Naive thymus-derived CD4-positive, alpha-beta T cell (primary cell): ENCODE measurements at regions of chr9 and their contacts with region 1.

Region 1: DNA sequence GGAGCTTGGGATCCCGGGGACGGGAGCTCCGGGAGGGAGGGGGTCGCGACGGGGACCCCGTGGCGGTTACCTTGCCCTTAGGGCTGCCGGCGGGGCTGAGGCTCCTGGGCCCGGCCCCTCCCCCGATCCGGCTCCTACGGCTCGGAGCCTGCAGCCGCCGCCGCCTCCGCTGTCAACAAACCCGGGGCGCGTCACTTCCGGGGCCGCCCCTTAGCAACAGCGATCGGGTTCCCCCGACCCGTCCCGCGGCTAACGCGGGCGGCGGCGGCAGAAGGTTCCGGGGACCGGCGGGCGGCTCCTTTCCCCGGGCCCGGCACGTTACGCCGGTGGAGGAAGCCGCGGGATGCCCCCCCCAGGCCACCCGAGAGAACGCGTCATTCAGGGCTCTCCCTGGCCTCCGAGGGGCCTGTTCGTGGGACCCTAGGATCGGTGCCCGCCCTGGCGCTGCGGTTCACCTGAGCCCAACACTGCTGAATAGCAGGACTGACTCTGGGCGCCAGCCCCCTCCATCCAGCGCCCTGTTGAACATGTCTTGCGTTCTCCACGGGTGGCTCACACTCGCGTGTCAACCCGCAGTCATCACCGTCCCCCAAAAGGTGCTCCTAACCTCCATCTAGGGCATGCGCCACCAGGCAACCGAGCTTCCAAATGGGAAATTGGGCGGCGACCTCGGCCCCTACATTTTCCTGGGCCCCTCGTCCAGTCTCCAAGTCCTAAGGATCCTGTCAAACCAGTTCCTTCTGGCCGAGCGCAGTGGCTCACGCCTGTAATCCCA is at the start of gene ZER1:
- DNase-seq: peak; percentile 92 to 98 (median 95)
- ATAC-seq: peak; percentile 97
- H3K4me3 ChIP-seq: peak within 1 kb of the TSS; percentile 97
- H3K4me3 Mint-ChIP-seq: peak within 1 kb of the TSS; percentile 95 to 99 (median 98)
- H3K27ac ChIP-seq: peak within 1 kb of the TSS; percentile 93
- H3K27ac Mint-ChIP-seq: peak within 1 kb of the TSS; percentile 93 to 100 (median 100)
- H3K4me1 ChIP-seq: peaks cover 7 to 12% of the 10 kb centered on the region in 2 donors
- H3K4me1 Mint-ChIP-seq: peaks cover 21 to 40% (median 39%) of the 10 kb centered on the region in 7 donors
- H3K27me3 ChIP-seq: no peaks in the 10 kb centered on the region
- H3K27me3 Mint-ChIP-seq: no peaks in the 10 kb centered on the region
- total RNA-seq, gene ZER1: 22.7 to 51.2 (median 34.7) TPM

Region 2: DNA sequence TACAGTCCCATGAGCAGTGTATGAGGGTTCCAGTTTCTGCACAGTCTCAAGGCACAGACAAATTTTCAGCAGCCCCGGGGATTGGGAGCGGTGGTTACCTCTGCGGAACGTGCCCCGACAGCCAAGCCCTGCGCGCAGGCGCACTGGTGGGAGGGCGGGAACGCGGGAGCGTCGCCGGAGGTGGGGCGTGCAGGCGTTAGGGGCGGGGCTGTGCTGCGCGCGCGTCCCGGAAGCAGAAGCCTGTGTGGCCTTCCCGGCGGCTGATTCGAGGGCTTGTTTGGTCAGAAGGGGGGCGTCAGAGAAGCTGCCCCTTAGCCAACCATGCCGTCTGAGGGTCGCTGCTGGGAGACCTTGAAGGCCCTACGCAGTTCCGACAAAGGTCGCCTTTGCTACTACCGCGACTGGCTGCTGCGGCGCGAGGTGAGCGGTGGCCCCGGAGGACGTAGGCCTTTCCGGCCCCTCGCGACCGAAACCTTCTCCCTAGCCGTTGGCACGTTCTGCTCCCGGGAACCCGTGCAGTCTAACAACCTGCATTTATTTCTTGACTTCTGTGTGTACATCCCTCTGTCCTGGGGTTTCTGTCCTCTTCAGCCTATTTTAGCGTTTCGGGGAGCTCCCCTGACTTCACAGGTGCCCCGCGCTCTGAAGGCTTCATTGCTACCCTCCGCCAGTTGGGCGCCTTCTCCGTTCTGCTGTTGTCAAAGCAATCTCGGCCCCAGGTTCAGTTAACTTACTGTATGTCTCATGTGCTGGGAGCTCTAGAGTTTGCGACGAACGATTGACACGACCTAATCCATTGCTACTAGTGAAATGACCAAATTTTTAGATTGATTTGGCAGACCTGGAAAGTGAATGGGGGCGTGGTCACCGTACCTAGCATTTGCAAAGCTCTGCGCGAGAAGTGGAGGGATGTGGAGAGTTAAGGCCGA is 267.2 kb before region 1 on chr9 and contains the start of gene GLE1:
- CTCF ChIA-PET with region 1: no interaction called
- POLR2A ChIA-PET with region 1: no interaction called
- intact Hi-C with region 1: loop called in 1 of 2 experiments (anchors 2 kb)
- DNase-seq: peak; percentile 93 to 99 (median 97)
- ATAC-seq: peak; percentile 98
- H3K4me3 ChIP-seq: peak within 1 kb of the TSS; percentile 97
- H3K4me3 Mint-ChIP-seq: peak within 1 kb of the TSS; percentile 92 to 100 (median 99)
- H3K27ac ChIP-seq: peak within 1 kb of the TSS; percentile 92
- H3K27ac Mint-ChIP-seq: peak within 1 kb of the TSS; percentile 82 to 100 (median 99)
- H3K4me1 ChIP-seq: peaks cover 8 to 11% of the 10 kb centered on the region in 2 donors
- H3K4me1 Mint-ChIP-seq: peaks cover 0 to 38% (median 34%) of the 10 kb centered on the region in 7 donors
- H3K27me3 ChIP-seq: no peaks in the 10 kb centered on the region
- H3K27me3 Mint-ChIP-seq: no peaks in the 10 kb centered on the region
- total RNA-seq, gene GLE1: 14.2 to 46.5 (median 30.5) TPM

Region 3: GRCh38 chr9:128656416-128657343 is 115.3 kb before region 1 on chr9 and contains the start of gene DYNC2I2:
- CTCF ChIA-PET with region 1: no interaction called
- POLR2A ChIA-PET with region 1: interaction called, 5 read pairs
- intact Hi-C with region 1: loop called (anchors 1 to 5 kb)
- DNase-seq: peak; percentile 91 to 96 (median 96)
- ATAC-seq: peak; percentile 98
- H3K4me3 ChIP-seq: peak within 1 kb of the TSS; percentile 96
- H3K4me3 Mint-ChIP-seq: peak within 1 kb of the TSS; percentile 88 to 98 (median 94)
- H3K27ac ChIP-seq: peak within 1 kb of the TSS; percentile 99
- H3K27ac Mint-ChIP-seq: peak within 1 kb of the TSS; percentile 95 to 100 (median 99)
- H3K4me1 ChIP-seq: peaks cover 3 to 9% of the 10 kb centered on the region in 2 donors
- H3K4me1 Mint-ChIP-seq: peaks cover 0 to 14% (median 7%) of the 10 kb centered on the region in 7 donors
- H3K27me3 ChIP-seq: no peaks in the 10 kb centered on the region
- H3K27me3 Mint-ChIP-seq: no peaks in the 10 kb centered on the region
- total RNA-seq, gene DYNC2I2: 2.5 to 41.7 (median 3.8) TPM

Region 4: GRCh38 chr9:128723866-128724743 is 47.8 kb before region 1 on chr9 and contains the start of gene ZDHHC12:
- CTCF ChIA-PET with region 1: no interaction called
- POLR2A ChIA-PET with region 1: interaction called, 9 read pairs
- intact Hi-C with region 1: loop called (anchors 1 kb)
- DNase-seq: peak; percentile 96 to 99 (median 99)
- ATAC-seq: peak; percentile 97
- H3K4me3 ChIP-seq: peak within 1 kb of the TSS; percentile 97
- H3K4me3 Mint-ChIP-seq: peak within 1 kb of the TSS; percentile 85 to 97 (median 94)
- H3K27ac ChIP-seq: peak within 1 kb of the TSS; percentile 89
- H3K27ac Mint-ChIP-seq: peak within 1 kb of the TSS; percentile 85 to 96 (median 94)
- H3K4me1 ChIP-seq: peaks cover 13 to 29% of the 10 kb centered on the region in 2 donors
- H3K4me1 Mint-ChIP-seq: peaks cover 23 to 46% (median 39%) of the 10 kb centered on the region in 7 donors
- H3K27me3 ChIP-seq: no peaks in the 10 kb centered on the region
- H3K27me3 Mint-ChIP-seq: no peaks in the 10 kb centered on the region
- total RNA-seq, gene ZDHHC12: 21.2 to 70.3 (median 25.7) TPM

Region 5: GRCh38 chr9:128829477-128830251 is 57.7 kb after region 1 on chr9 and contains the start of gene SPOUT1:
- CTCF ChIA-PET with region 1: no interaction called
- POLR2A ChIA-PET with region 1: interaction called, 4 read pairs
- intact Hi-C with region 1: loop called in 1 of 2 experiments (anchors 2 kb)
- DNase-seq: peak; percentile 86 to 95 (median 92)
- ATAC-seq: peak; percentile 100
- H3K4me3 ChIP-seq: peak within 1 kb of the TSS; percentile 91
- H3K4me3 Mint-ChIP-seq: peak within 1 kb of the TSS; percentile 92 to 99 (median 95)
- H3K27ac ChIP-seq: peak within 1 kb of the TSS; percentile 81
- H3K27ac Mint-ChIP-seq: peak within 1 kb of the TSS; percentile 91 to 97 (median 94)
- H3K4me1 ChIP-seq: peaks cover 8 to 15% of the 10 kb centered on the region in 2 donors
- H3K4me1 Mint-ChIP-seq: peaks cover 14 to 26% (median 19%) of the 10 kb centered on the region in 7 donors
- H3K27me3 ChIP-seq: no peaks in the 10 kb centered on the region
- H3K27me3 Mint-ChIP-seq: no peaks in the 10 kb centered on the region
- total RNA-seq, gene SPOUT1: 38.9 to 83.6 (median 65.2) TPM

Region 6: GRCh38 chr9:129036241-129036922 is 264.4 kb after region 1 on chr9 and contains the start of gene MIGA2:
- CTCF ChIA-PET with region 1: no interaction called
- POLR2A ChIA-PET with region 1: interaction called, 4 read pairs
- intact Hi-C with region 1: loop called in 1 of 2 experiments (anchors 5 kb)
- DNase-seq: peak; percentile 78 to 93 (median 90)
- ATAC-seq: peak; percentile 99
- H3K4me3 ChIP-seq: peak within 1 kb of the TSS; percentile 87
- H3K4me3 Mint-ChIP-seq: peak within 1 kb of the TSS; percentile 90 to 99 (median 94)
- H3K27ac ChIP-seq: peak within 1 kb of the TSS; percentile 72
- H3K27ac Mint-ChIP-seq: peak within 1 kb of the TSS; percentile 56 to 93 (median 87)
- H3K4me1 ChIP-seq: peaks cover 13 to 17% of the 10 kb centered on the region in 2 donors
- H3K4me1 Mint-ChIP-seq: peaks cover 22 to 41% (median 37%) of the 10 kb centered on the region in 7 donors
- H3K27me3 ChIP-seq: no peaks in the 10 kb centered on the region
- H3K27me3 Mint-ChIP-seq: no peaks in the 10 kb centered on the region
- total RNA-seq, gene MIGA2: 50.0 to 73.4 (median 60.7) TPM